ENCODE measurements at regions of chr20 and their contacts with region 1.

Region 1: GRCh38 chr20:59598625-59599310 is 5.6 kb upstream of the PHACTR3 start:
- DNase-seq: peak; percentile 84
- CTCF ChIP-seq: peak; percentile 86

Region 2: DNA sequence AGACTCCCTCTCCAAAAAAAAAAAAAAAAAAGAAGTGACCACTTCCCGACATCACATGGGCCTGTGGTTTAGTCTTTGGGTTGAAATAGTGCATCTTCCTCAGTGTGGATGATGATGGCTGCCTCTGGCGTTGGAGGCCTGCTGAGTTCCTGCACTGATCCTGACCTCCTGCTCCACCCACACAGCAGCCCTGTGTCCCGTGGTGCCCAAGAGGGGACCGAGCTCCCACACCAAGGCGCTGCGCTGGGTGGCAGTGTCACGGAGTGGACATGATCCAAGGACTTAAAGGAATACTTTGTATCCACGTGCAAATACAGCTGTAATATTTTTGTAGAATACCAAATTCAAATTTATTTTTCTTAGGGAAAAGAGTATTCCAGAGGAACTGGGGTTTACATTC is 103.6 kb before region 1 on chr20:
- in situ Hi-C with region 1: no loop called
- DNase-seq: no peak
- CTCF ChIP-seq: no peak

Region 3: DNA sequence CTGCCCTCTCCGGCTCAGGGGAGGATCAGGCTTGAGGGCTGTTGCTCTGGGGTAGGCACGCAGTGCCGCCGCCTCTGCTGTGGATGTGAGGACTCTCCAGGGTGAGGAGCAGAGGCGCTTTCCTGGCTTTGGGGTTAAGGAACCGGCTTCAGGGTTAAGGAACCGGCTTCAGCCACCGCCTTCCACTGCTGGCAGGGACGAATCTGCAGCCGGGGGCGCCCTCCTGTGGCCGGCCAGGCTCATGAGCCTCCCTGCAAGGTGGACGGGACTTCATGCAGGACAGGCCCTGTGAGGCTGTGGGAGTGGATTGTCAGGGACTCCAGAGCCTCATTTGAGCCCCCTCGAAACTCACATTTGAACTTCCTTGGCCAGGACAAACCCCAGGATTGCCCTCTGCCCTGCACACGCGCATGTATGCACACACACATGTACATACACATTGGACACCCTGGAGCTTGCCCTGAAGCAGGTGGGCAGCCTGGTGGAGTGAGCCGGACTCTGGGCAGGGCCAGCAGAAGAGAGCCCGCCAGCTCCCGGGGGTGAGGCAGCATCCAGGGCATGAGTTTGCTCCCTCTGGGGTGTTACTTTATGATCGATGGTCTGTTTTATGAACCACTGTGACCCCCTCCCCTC is 152.4 kb after region 1 on chr20:
- in situ Hi-C with region 1: loop called (anchors 10 kb)
- DNase-seq: peak; percentile 91
- CTCF ChIP-seq: peak; percentile 86

Measured in GM13976 (cell line).